Activated T-helper 1 cell treated with anti-CD3 and anti-CD28 coated beads, Interleukin-12 subunit alpha, Interleukin-12 subunit beta, Interleukin-2, Interleukin-4 antibody, amounts not matched to agents 30 ng/mL and 10 ng/mL and 1 ng/mL, durations not matched to agents 14 hours and 24 hours and 36 hours (primary cell): ENCODE measurements at regions of chr17 and their contacts with region 1.

Region 1: DNA sequence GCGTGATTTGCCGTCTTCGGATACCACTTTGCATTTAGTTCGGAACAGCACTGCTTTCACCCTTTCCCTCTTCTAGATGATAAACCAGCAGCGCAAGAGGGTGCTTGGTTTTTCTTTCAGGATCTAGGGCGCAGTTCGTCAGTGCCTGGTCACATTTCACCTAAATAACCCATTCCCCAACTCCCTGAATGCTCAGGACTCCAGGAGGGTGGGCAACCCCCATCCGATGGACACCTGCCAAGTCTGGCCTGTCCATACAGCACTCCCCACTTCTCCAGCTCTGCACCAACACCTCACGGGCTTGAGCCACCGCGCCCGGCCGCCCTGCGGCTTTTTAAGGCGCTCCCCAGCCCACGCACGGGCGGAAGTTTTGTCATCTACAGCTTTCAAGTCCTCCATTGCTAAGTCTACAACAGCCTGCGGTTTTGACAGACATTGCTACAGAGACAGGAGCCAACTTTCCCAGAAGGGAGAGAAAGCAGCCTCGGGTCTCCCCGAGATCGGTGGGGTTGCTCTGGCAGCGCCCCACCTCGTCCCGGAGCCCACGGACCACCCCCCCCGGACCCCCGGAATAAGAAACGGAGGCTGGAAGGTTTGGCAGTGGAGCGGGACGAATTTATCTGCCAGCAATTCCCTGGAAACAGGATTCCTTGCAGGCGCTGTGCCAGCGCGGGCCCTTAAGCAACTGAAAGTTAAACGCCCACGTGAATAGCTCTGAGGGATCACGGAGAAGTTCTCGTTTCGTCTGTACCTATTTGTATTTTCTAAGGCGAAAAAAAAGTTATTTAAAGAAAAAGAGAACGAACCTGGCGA is 38.6 kb upstream of the SLFN13 start:
- DNase-seq: peak; percentile 71
- H3K4me3 Mint-ChIP-seq: peak overlapping the region; percentile 92
- H3K27ac Mint-ChIP-seq: peak overlapping the region; percentile 93
- H3K4me1 Mint-ChIP-seq: peaks cover 78% of the 10 kb centered on the region
- H3K27me3 Mint-ChIP-seq: peaks cover 2% of the 10 kb centered on the region

Region 2: GRCh38 chr17:35214631-35215273 is 272.4 kb before region 1 on chr17:
- intact Hi-C with region 1: loop called (anchors 1 kb)
- DNase-seq: peak; percentile 12
- H3K4me3 Mint-ChIP-seq: peak overlapping the region; percentile 40
- H3K27ac Mint-ChIP-seq: peak overlapping the region; percentile 92
- H3K4me1 Mint-ChIP-seq: peaks cover 85% of the 10 kb centered on the region
- H3K27me3 Mint-ChIP-seq: no peaks in the 10 kb centered on the region

Region 3: GRCh38 chr17:35373534-35373983 is 113.6 kb before region 1 on chr17 and contains the start of gene SLFN11:
- intact Hi-C with region 1: loop called (anchors 1 kb)
- DNase-seq: peak; percentile 79
- H3K4me3 Mint-ChIP-seq: peak within 1 kb of the TSS; percentile 93
- H3K27ac Mint-ChIP-seq: peak within 1 kb of the TSS; percentile 95
- H3K4me1 Mint-ChIP-seq: peaks cover 66% of the 10 kb centered on the region
- H3K27me3 Mint-ChIP-seq: no peaks in the 10 kb centered on the region
- total RNA-seq, gene SLFN11: 70.8 and 76.0 TPM in 2 replicates

Region 4: GRCh38 chr17:35448214-35448898 is 38.8 kb before region 1 on chr17 and contains the start of gene SLFN13:
- intact Hi-C with region 1: loop called (anchors 1 kb)
- DNase-seq: peak; percentile 84
- H3K4me3 Mint-ChIP-seq: peak within 1 kb of the TSS; percentile 67
- H3K27ac Mint-ChIP-seq: peak within 1 kb of the TSS; percentile 66
- H3K4me1 Mint-ChIP-seq: peaks cover 27% of the 10 kb centered on the region
- H3K27me3 Mint-ChIP-seq: no peaks in the 10 kb centered on the region
- total RNA-seq, gene SLFN13: 32.2 and 32.7 TPM in 2 replicates

Region 5: DNA sequence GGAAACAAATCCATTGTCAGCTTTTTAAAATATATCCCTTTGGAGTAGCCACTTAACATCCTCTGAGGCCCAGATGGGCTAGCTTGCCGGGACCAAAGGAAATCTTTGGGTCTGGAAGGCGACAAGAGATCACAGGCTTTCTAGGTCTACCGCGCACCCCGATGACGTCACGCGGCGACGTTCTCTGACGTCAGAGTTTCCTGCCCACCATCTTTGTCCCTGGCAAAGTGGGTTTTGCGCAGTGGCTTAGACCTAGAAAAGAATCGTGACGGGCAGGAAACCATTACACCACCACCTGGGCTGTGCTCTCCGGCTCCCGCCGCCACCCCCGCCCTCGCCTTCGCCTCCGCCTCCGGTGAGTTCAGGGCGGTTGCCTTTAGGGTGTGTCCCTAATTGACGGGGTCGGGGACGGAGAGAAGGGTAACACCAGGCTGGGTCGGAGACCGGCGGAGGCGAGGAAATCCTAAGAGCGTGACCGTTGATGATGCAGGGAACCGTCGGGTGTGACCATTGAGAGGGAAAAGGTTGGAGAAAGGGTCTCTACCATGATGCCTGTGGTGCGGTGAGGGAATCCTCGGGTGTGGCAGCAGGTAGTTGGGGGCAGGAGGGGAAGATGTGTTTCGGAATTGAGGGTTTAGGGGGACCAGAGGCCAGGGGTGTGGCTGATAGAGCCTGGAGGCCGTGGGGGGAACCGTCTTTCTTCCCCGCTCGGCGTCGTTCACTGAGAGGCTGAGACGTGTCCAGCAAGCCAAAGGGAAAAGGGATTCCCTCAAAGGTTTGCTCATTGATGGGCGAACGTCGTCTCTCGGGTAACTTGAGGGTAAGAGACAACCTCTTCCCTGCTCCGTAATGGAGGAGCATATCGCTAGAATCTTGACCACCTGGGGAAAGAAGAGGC is 100.2 kb after region 1 on chr17 and contains the start of gene AP2B1:
- intact Hi-C with region 1: loop called (anchors 5 kb)
- DNase-seq: peak; percentile 96
- H3K4me3 Mint-ChIP-seq: peak within 1 kb of the TSS; percentile 94
- H3K27ac Mint-ChIP-seq: peak within 1 kb of the TSS; percentile 96
- H3K4me1 Mint-ChIP-seq: peaks cover 38% of the 10 kb centered on the region
- H3K27me3 Mint-ChIP-seq: peaks cover 3% of the 10 kb centered on the region
- total RNA-seq, gene AP2B1: 156 and 167 TPM in 2 replicates